BJ (cell line): ENCODE measurements at regions of chr3 and their contacts with region 1.

Region 1: GRCh38 chr3:159763602-159764489 is 224.8 kb upstream of the IL12A start:
- DNase-seq: no peak
- H3K4me3 ChIP-seq: peak overlapping the region; percentile 81
- H3K27me3 ChIP-seq: no peaks in the 10 kb centered on the region
- CTCF ChIP-seq: no peak; the same call in 1 of the 2 replicates

Region 2: GRCh38 chr3:159548675-159549335 is 215.0 kb before region 1 on chr3:
- CTCF ChIA-PET with region 1: no interaction called
- POLR2A ChIA-PET with region 1: no interaction called
- DNase-seq: peak; percentile 4
- H3K4me3 ChIP-seq: no peak overlapping the region
- H3K27me3 ChIP-seq: no peaks in the 10 kb centered on the region
- CTCF ChIP-seq: no peak

Region 3: GRCh38 chr3:159732172-159733111 is 31.4 kb before region 1 on chr3:
- CTCF ChIA-PET with region 1: interaction called, 17 read pairs
- POLR2A ChIA-PET with region 1: interaction called, 16 read pairs
- DNase-seq: peak; percentile 72
- H3K4me3 ChIP-seq: peak overlapping the region; percentile 26
- H3K27me3 ChIP-seq: no peaks in the 10 kb centered on the region
- CTCF ChIP-seq: 0 out of 2 replicates have a peak, but pooled peaks have one; percentile 15

Region 4: DNA sequence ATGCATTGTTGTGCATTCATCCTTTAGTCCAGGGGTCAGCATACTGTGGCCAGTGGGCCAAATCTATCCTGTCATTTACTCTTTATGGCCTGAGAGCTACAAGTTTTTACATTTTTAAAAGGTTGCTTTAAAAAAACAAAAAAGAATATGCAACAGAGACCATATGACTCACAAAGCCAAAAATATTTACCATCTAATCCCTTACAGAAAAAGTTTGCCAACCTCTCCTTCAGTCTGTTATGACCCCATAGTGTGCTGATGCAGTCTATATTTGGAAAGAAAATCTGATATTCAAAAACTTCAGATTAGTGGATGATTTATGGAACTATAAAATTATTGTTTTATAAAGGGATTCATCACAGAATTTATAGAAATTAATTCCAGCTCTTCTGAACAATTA is 12.7 kb before region 1 on chr3:
- CTCF ChIA-PET with region 1: interaction called, 3 read pairs
- POLR2A ChIA-PET with region 1: interaction called, 14 read pairs
- DNase-seq: no peak
- H3K4me3 ChIP-seq: no peak overlapping the region
- H3K27me3 ChIP-seq: no peaks in the 10 kb centered on the region
- CTCF ChIP-seq: no peak

Region 5: DNA sequence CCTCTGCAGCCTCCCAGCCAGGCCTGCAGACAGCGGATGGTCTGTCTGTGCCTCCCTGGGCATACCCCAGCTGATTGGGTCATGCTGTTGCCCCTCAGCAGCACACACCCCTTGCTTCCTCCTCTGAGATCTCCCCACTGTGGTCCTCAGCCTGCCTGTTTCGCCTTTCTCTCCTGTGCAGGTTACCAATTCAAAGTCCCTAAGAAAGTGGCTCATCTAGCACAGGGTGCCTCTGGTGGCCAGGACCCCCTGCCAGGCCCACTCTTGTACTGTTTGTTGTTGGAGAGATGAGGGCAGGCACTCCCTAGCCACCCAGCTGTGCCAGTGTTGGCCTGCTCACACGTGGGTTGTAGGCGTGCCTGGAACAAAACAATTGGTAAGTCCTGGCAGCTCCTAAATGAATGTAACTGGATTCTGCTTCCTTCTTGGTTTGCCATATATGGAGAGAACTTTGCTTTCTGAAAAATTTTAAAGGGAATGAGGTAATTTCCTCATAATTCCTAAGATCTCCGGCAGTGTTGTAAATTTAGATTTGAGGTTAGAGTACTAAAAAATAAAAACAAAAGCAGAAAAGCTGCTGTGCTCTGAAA is 11.6 kb after region 1 on chr3:
- CTCF ChIA-PET with region 1: interaction called, 23 read pairs
- POLR2A ChIA-PET with region 1: interaction called, 4 read pairs
- DNase-seq: peak; percentile 61
- H3K4me3 ChIP-seq: no peak overlapping the region
- H3K27me3 ChIP-seq: no peaks in the 10 kb centered on the region
- CTCF ChIP-seq: no peak

Region 6: GRCh38 chr3:159787191-159787590 is 23.3 kb after region 1 on chr3:
- CTCF ChIA-PET with region 1: interaction called, 11 read pairs
- POLR2A ChIA-PET with region 1: interaction called, 9 read pairs
- DNase-seq: peak; percentile 29
- H3K4me3 ChIP-seq: no peak overlapping the region
- H3K27me3 ChIP-seq: no peaks in the 10 kb centered on the region
- CTCF ChIP-seq: no peak